Activated naive CD8-positive, alpha-beta T cell treated with anti-CD3 and anti-CD28 coated beads, Interleukin-2, amount 10 ng/mL, durations not matched to agents 7 days and 5 days (primary cell): ENCODE measurements at regions of chr1 and their contacts with region 1.

Region 1: GRCh38 chr1:24155011-24155787 is 12.3 kb upstream of the IL22RA1 start:
- DNase-seq: no peak
- ATAC-seq: no peak
- H3K4me3 Mint-ChIP-seq: no peak overlapping the region
- H3K27ac Mint-ChIP-seq: no peak overlapping the region
- H3K4me1 Mint-ChIP-seq: peaks cover 12% of the 10 kb centered on the region
- H3K27me3 Mint-ChIP-seq: peaks cover 20% of the 10 kb centered on the region

Region 2: DNA sequence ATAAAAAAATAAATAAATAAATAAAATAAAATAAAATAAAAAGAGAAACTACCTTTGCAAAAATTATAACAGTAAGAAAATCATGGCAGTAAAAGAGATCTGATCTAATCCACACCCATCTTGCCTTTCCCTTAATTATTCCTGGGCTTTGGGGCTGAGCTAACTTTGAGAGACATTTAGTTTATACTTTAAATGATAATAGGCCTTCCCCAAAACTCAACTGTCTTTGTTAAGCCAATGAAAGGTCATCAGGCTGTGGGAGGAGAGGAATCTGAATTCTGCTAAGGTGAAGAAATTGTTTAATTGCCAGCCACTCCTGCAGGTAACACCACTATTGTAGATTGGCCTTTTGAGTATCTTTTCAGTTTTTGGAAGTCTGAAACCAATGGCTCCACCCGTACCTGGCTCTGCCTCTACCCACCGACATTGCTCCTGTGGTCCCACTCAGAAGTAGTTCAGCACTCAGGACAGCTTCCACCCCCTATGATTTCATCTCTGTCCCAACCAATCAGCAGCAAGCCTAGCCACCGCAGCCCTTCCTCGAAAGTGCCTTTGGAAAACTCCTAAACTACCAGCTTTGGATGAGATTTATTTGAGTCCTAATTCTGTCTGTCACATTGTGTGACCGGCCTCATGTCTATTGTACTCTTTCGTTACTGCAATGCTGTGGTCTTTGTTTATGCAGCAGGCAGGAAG is 218.6 kb before region 1 on chr1:
- POLR2A ChIA-PET with region 1: interaction called, 10 read pairs
- DNase-seq: no peak
- ATAC-seq: no peak
- H3K4me3 Mint-ChIP-seq: no peak overlapping the region
- H3K27ac Mint-ChIP-seq: no peak overlapping the region
- H3K4me1 Mint-ChIP-seq: no peaks in the 10 kb centered on the region
- H3K27me3 Mint-ChIP-seq: peaks cover 2% of the 10 kb centered on the region